HepG2 (cell line): ENCODE measurements at regions of chr2 and their contacts with region 1.

Region 1: DNA sequence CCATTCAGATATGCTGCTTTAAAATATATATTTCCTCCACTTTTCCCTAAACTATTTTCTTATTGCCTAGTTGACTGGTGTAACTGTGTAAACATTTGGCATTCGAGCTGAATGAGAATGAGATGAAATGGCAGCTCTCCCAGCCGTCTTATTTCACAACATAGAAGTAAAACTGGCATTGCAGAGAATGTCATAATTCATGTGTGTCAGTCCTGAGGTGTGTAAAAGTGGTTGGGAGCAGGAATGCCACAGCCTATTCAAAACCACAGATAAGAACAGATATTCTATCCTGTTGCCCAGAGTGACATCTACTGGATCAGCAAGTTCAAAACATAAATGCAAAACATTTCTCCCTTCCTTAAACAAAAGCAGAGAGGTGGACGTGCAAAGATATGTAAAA is 565.5 kb upstream of the CHAC2 start:
- DNase-seq: peak; percentile 25
- ATAC-seq: peak; percentile 86
- H3K4me3 ChIP-seq: no peak overlapping the region
- H3K27ac ChIP-seq: no peak overlapping the region
- H3K4me1 ChIP-seq: no peaks in the 10 kb centered on the region
- H3K27me3 ChIP-seq: no peaks in the 10 kb centered on the region
- CTCF ChIP-seq: peak; percentile 60
- EP300 ChIP-seq: no peak
- POLR2A ChIP-seq: no peak
- RAD21 ChIP-seq: no peak

Region 2: DNA sequence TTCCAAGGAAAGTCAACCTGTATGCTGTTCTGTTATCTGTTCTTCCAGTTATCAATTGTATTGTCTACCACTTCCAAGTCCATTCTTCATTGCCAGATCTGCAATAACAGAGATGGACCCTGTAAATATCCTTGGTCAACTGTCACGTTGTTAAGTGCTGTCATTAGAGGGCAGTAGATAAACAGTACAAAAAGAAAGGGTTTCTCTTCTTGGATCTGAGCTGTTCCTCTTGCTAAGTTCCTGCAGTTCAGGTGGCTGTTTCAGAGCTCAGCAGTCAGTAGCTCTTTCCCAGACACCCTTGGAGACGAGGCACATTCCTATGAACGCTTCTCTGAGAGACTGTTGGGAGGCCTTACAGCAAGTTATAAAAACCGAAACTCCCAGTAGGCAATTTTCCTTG is 391.6 kb before region 1 on chr2:
- CTCF ChIA-PET with region 1: no interaction called
- POLR2A ChIA-PET with region 1: no interaction called
- in situ Hi-C with region 1: no loop called
- intact Hi-C with region 1: loop called (anchors 1 kb)
- DNase-seq: no peak
- ATAC-seq: peak; percentile 51; the same call in 2 of the 3 replicates
- H3K4me3 ChIP-seq: no peak overlapping the region
- H3K27ac ChIP-seq: no peak overlapping the region
- H3K4me1 ChIP-seq: no peaks in the 10 kb centered on the region
- H3K27me3 ChIP-seq: no peaks in the 10 kb centered on the region
- CTCF ChIP-seq: peak; percentile 50
- EP300 ChIP-seq: no peak
- POLR2A ChIP-seq: no peak
- RAD21 ChIP-seq: no peak

Region 3: DNA sequence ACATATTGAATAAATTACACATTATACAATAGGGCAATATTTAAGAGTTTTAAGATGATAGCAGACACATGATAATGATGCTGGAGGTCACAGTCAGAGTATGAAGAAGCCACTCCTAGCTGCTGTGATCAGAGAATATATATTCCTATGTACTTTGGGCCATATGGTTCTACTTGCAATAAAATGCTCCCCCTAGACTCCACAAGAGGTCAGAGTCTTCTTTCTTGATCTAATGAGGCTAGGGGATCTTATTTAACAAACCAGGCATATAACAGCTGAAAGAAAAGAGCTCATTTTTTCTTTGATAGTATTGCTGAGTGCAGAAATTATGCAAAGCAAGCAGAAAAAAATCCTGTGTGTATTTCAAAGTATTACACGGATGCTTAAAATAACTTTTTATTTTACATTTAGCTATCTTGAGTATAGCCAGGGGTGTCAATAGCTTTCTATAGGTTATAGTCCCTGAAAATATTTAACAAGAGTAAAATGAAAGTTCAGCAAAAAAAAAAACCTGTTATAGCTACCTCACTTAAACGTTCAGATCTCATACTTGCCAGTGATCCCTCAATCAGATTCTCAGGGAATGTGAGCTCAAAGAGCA is 183.1 kb before region 1 on chr2:
- CTCF ChIA-PET with region 1: no interaction called
- POLR2A ChIA-PET with region 1: no interaction called
- in situ Hi-C with region 1: no loop called
- intact Hi-C with region 1: loop called (anchors 1 kb)
- DNase-seq: no peak
- ATAC-seq: 0 out of 3 replicates have a peak, but pooled peaks have one; percentile 45
- H3K4me3 ChIP-seq: no peak overlapping the region
- H3K27ac ChIP-seq: no peak overlapping the region
- H3K4me1 ChIP-seq: no peaks in the 10 kb centered on the region
- H3K27me3 ChIP-seq: no peaks in the 10 kb centered on the region
- CTCF ChIP-seq: 0 out of 2 replicates have a peak, but pooled peaks have one; percentile 10
- EP300 ChIP-seq: no peak
- POLR2A ChIP-seq: no peak
- RAD21 ChIP-seq: no peak

Region 4: GRCh38 chr2:53182601-53183000 is 19.5 kb before region 1 on chr2:
- CTCF ChIA-PET with region 1: no interaction called
- POLR2A ChIA-PET with region 1: no interaction called
- in situ Hi-C with region 1: no loop called
- intact Hi-C with region 1: loop called (anchors 1 kb)
- DNase-seq: no peak
- ATAC-seq: peak; percentile 35; the same call in 2 of the 3 replicates
- H3K4me3 ChIP-seq: no peak overlapping the region
- H3K27ac ChIP-seq: no peak overlapping the region
- H3K4me1 ChIP-seq: no peaks in the 10 kb centered on the region
- H3K27me3 ChIP-seq: peaks cover 0 to 2% of the 10 kb centered on the region in 2 experiments; a peak in 1 of 5 replicates
- CTCF ChIP-seq: no peak
- EP300 ChIP-seq: no peak
- POLR2A ChIP-seq: no peak
- RAD21 ChIP-seq: no peak